GM10248 (cell line): ENCODE measurements at regions of chr15 and their contacts with region 1.

Region 1: GRCh38 chr15:31365655-31366127 is 39.1 kb downstream of the KLF13 start:
- DNase-seq: peak; percentile 79
- CTCF ChIP-seq: peak; percentile 64

Region 2: DNA sequence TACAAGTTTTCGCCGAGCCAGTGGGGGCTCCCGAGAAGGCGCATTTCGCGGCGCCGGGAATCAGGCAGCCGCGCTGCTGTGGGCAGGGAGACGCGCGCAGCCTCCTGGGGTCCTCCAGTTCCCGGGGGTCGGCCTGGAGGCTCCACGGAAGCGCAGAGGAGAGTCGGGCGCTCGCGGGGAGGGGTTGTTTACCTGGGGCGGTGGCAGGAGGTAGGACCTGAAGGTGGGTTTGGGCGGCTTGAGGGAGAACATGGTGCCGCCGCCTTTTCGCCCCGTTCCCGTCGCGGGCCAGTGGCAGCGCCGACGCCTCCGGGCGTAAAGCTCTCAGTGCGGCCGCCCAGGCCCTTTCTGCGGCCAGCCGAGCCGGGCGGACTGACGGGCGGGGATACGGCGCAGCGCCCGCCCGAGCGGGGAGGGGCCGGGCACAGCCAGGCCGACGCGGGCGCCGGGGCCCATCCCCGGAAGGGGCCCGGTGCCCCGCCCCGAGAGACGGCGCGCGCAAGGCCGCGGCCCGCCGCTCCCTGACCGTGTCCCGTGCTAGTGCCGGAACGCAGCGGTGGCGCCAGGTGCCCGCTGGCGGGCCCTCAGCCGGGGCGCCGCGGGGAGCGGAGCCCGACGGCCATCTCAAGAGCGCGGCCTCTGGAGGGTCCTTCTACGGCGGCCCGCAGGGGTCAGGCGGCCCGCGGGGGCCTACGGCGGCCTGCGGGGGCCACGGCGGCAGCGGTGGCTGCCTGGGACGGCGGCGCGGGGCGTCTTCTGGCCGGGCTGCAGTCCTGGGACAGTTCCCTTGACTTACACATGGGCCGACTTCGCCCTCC is 374.2 kb before region 1 on chr15 and contains the start of gene MTMR10:
- CTCF ChIA-PET with region 1: no interaction called
- POLR2A ChIA-PET with region 1: no interaction called
- DNase-seq: peak; percentile 93
- CTCF ChIP-seq: no peak

Region 3: GRCh38 chr15:31344823-31345605 is 20.7 kb before region 1 on chr15:
- CTCF ChIA-PET with region 1: interaction called, 37 read pairs
- POLR2A ChIA-PET with region 1: interaction called, 3 read pairs
- DNase-seq: peak; percentile 63
- CTCF ChIP-seq: no peak

Region 4: GRCh38 chr15:31352911-31353811 is 12.5 kb before region 1 on chr15:
- CTCF ChIA-PET with region 1: interaction called, 37 read pairs
- POLR2A ChIA-PET with region 1: interaction called, 5 read pairs
- DNase-seq: peak; percentile 89
- CTCF ChIP-seq: peak; percentile 36

Region 5: DNA sequence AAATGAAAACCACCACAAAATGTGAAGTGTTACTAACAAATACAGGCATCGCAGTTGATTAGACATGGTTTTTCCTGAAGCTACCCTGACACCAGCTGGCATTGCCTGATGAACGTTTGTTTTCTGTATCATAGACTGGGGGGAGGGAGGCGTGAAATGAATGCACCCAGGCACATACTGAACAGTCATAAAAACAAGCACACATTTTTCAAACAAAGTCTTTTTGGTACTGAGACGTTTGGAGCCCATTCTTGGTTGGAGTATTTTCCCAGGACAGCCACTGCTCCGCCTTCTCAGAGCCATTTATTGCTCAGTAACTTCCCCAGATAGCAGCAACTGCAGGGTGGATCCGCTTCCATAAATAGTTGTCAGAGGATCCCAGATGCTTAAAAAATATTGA is 13.4 kb after region 1 on chr15:
- CTCF ChIA-PET with region 1: interaction called, 10 read pairs
- POLR2A ChIA-PET with region 1: no interaction called
- DNase-seq: no peak
- CTCF ChIP-seq: no peak

Region 6: GRCh38 chr15:31435261-31435911 is 69.7 kb after region 1 on chr15:
- CTCF ChIA-PET with region 1: interaction called, 47 read pairs
- POLR2A ChIA-PET with region 1: interaction called, 9 read pairs
- DNase-seq: peak; percentile 84
- CTCF ChIP-seq: peak; percentile 91

Region 7: DNA sequence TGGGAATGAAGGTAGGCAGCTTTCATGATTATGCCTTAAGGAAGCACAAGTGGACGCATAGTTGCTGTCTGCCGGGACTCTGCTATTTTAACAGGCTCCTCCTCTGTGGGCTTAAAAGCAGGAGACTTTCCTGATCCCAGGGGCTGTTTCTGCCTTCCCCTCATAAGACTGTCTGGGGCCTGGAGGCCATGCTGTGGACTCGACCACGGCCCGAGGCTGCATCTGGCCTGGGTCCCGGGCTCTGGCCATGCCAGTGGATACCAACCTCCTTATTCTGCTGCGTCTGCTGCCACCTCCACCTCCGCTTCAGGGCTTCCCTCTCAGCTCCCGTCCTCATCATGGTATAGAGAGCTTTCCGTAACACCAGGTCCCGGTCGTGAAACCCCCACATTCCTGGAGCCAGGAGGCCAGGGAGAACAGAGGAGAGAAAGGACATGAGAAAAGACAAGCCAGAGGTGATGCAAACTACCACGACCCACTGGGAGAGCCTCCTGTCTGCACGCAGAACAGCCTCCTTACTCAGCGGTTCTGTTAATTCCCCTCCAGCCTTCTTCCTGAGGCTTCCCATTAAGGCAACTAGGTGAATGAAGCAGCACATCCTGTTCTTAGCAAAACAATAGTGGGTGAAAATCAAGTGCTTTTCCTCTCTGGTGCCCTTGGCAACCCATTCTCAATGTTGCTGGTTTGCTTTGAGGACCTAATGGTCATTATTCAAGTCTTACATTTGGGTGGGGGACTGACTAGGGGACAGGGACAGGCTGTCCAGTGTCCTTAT is 161.4 kb after region 1 on chr15:
- CTCF ChIA-PET with region 1: no interaction called
- POLR2A ChIA-PET with region 1: no interaction called
- DNase-seq: no peak
- CTCF ChIP-seq: no peak